ENCODE measurements at regions of chr14 and their contacts with region 1.

Region 1: DNA sequence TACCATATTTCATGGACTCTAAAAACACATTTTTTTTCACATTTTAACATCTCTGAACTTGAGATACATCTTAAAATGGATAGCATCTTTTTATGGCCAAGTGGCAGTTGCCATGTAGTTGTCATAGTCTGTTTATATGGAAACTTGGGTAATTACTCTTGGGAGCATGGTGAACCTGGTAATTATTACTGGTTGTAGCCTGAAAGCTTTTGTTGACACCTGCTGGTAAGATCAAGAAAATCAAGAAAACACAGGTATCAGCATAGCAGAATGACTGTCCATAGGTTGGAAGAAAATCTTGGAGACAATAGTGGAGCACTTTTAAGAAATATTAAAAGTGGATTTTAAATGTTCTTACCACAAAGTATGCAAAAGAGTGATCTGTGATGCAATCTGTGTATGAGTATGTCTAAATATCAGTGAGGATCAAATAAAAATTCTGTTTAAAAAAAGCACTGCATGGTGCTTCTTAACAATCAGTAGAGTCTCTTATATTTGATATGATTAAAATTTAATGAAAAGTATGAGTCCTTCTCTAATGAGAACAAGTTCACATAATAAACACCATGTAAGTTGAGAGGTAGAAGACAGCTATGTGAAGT is 44.2 kb downstream of the TTC8 start:
- DNase-seq: peak; percentile 10
- CTCF ChIP-seq: peak; percentile 32

Region 2: GRCh38 chr14:88667555-88668273 is 200.9 kb before region 1 on chr14:
- in situ Hi-C with region 1: loop called (anchors 25 kb)
- DNase-seq: peak; percentile 63
- CTCF ChIP-seq: peak; percentile 68

Region 3: GRCh38 chr14:89040460-89041259 is 172.0 kb after region 1 on chr14:
- in situ Hi-C with region 1: no loop called
- DNase-seq: peak; percentile 82
- CTCF ChIP-seq: peak; percentile 84

Measured in GM13976 (cell line).